Activated CD8-positive, alpha-beta T cell treated with anti-CD3 and anti-CD28 coated beads for 36 hours (primary cell): ENCODE measurements at regions of chr16 and their contacts with region 1.

Region 1: GRCh38 chr16:21656795-21657768 is 4.7 kb upstream of the IGSF6 start:
- DNase-seq: peak; percentile 43
- ATAC-seq: no peak
- H3K4me3 Mint-ChIP-seq: no peak overlapping the region
- H3K27ac Mint-ChIP-seq: peak overlapping the region; percentile 69
- H3K4me1 Mint-ChIP-seq: peaks cover 48% of the 10 kb centered on the region
- H3K27me3 Mint-ChIP-seq: no peaks in the 10 kb centered on the region
- CTCF ChIP-seq: peak; percentile 94

Region 2: GRCh38 chr16:21584817-21585216 is 72.3 kb before region 1 on chr16:
- CTCF ChIA-PET with region 1: interaction called, 11 read pairs
- POLR2A ChIA-PET with region 1: no interaction called
- intact Hi-C with region 1: no loop called
- DNase-seq: no peak
- ATAC-seq: no peak
- H3K4me3 Mint-ChIP-seq: no peak overlapping the region
- H3K27ac Mint-ChIP-seq: no peak overlapping the region
- H3K4me1 Mint-ChIP-seq: peaks cover 2% of the 10 kb centered on the region
- H3K27me3 Mint-ChIP-seq: no peaks in the 10 kb centered on the region
- CTCF ChIP-seq: no peak

Region 3: DNA sequence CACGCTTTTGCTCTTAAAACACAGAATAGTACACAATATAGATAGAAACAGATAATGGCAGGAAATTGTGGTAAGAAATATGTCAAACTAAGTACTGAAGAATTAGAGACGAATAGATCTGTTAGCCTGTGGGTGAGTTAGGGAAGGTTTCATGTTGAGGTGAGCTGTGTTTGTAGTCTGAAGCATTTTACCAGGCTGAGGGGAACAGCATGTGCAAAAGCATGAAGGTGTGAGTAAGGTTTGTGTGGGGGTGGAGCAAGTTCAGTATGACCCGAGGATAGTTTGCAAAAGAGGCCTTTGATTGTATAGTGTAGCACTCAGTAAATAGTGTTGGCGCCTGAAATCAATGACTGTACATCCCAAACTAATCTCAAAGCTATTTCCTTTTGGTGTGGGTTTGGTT is 18.5 kb before region 1 on chr16:
- CTCF ChIA-PET with region 1: interaction called, 38 read pairs
- POLR2A ChIA-PET with region 1: interaction called, 3 read pairs
- intact Hi-C with region 1: no loop called
- DNase-seq: peak; percentile 54
- ATAC-seq: peak; percentile 88
- H3K4me3 Mint-ChIP-seq: no peak overlapping the region
- H3K27ac Mint-ChIP-seq: peak overlapping the region; percentile 82
- H3K4me1 Mint-ChIP-seq: peaks cover 45% of the 10 kb centered on the region
- H3K27me3 Mint-ChIP-seq: no peaks in the 10 kb centered on the region
- CTCF ChIP-seq: no peak

Region 4: DNA sequence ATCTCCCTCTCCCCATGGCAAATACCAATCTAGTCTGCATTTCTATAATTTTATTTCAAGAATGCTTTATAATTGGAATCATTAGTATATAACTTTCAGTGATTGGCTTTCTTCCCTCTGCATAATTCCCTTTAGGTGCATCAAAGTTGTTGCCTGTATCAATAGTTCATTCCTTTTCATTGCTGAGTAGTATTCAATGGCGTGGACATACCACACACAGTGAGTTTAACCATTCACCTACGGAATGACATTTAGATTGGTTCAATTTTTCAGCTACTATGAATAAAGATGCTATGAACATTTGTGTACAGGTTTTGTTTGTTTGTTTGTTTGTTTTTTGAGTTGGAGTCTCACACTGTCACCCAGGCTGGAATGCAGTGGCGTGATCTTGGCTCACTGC is 16.4 kb after region 1 on chr16:
- CTCF ChIA-PET with region 1: interaction called, 13 read pairs
- POLR2A ChIA-PET with region 1: no interaction called
- intact Hi-C with region 1: no loop called
- DNase-seq: no peak
- ATAC-seq: no peak
- H3K4me3 Mint-ChIP-seq: no peak overlapping the region
- H3K27ac Mint-ChIP-seq: no peak overlapping the region
- H3K4me1 Mint-ChIP-seq: no peaks in the 10 kb centered on the region
- H3K27me3 Mint-ChIP-seq: no peaks in the 10 kb centered on the region
- CTCF ChIP-seq: no peak

Region 5: GRCh38 chr16:21698169-21699032 is 41.3 kb after region 1 on chr16:
- CTCF ChIA-PET with region 1: interaction called, 133 read pairs
- POLR2A ChIA-PET with region 1: interaction called, 3 read pairs
- intact Hi-C with region 1: no loop called
- DNase-seq: no peak
- ATAC-seq: no peak
- H3K4me3 Mint-ChIP-seq: no peak overlapping the region
- H3K27ac Mint-ChIP-seq: no peak overlapping the region
- H3K4me1 Mint-ChIP-seq: no peaks in the 10 kb centered on the region
- H3K27me3 Mint-ChIP-seq: no peaks in the 10 kb centered on the region
- CTCF ChIP-seq: no peak

Region 6: GRCh38 chr16:21719283-21719682 is 62.2 kb after region 1 on chr16:
- CTCF ChIA-PET with region 1: interaction called, 25 read pairs
- POLR2A ChIA-PET with region 1: no interaction called
- intact Hi-C with region 1: no loop called
- DNase-seq: no peak
- ATAC-seq: no peak
- H3K4me3 Mint-ChIP-seq: no peak overlapping the region
- H3K27ac Mint-ChIP-seq: no peak overlapping the region
- H3K4me1 Mint-ChIP-seq: peaks cover 9% of the 10 kb centered on the region
- H3K27me3 Mint-ChIP-seq: no peaks in the 10 kb centered on the region
- CTCF ChIP-seq: no peak